ENCODE measurements at regions of chr6 and their contacts with region 1.

Region 1: DNA sequence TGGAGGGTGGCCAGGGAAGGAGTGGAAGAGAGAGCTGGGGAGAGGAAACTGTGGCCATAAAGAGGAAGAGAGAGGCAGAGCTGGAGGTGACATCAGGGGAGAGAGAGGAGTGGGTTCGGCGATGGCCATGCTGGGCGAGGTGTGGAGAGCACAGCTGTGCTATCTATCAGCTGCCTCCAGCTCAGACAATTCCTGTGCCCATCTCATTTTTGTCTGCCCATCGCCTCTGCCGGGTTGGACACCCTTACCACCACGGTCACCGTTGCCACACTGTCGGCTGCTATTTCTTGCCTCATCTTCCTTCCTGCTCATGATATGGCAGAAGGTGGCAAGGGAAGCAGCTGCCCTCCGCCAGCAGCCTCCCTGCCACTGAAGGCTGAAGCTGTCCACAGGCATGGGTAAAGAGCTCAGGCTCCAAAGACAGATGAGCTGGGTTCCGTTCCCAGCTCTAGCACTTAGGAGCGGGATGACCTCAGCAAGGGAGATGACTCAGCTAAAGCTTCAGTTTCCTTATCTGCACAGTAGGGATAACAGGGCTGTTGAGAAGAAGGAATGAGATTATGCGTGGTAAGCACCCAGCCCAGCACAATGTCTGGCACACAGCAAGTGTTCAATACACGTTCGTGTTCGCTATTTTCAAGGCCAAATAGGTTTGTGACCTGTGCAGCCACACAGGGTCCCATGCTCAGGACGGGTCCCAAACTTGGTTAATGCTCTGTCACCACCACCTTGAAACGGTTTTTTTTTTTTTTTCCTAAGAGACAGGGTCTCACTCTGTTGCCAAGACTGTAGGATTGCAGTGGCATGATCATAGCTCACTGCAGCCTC is 21.9 kb upstream of the TAF8 start:
- DNase-seq: no peak
- ATAC-seq: peak; percentile 17
- H3K4me3 Mint-ChIP-seq: peak overlapping the region; percentile 72
- H3K27ac Mint-ChIP-seq: peak overlapping the region; percentile 95
- H3K4me1 Mint-ChIP-seq: peaks cover 71% of the 10 kb centered on the region
- H3K27me3 Mint-ChIP-seq: no peaks in the 10 kb centered on the region

Region 2: DNA sequence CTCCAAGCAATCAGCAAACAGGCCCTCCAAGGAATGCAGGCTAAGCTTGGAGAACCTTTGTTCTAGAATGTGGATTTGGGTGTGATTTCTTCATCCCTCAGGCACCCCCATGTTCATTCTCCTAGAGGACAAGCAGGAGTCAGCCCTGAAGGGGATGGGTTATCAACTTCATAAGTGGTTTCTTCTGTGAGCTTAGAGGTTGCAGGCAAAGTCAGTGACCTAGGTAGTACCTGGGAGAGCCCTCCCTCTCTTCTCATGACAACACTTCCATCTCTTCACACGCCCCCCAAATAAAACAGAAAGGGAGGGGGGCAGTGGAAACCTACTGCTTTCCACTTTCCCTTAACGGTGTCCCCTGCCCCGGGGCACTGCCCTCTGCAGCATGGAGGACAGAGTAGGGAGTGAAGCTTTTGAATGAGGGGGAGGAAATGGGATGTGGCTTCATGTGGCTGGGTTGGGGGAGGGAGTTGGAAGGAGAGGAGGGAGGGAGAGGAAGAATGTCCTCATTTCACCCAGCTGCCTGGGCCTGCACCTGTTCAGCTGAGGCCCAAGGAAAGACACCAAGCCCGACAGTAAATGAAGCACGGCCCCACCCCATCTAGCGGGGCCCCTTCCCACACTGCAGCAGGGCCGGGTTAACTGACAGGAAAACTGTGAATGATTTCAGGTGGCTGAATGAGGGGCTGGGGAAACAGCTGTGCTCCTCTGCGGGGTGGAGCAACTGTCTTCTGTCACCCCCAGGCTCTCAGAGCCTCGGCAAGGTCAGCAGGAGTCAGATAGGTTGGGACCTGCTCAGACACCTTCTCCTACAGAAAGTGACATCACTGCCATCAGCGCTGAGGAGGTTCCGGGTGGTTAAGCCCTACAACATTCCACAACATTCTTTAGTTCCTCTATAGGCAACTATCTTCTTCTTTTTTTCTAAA is 18.2 kb before region 1 on chr6:
- POLR2A ChIA-PET with region 1: interaction called, 10 read pairs
- DNase-seq: peak; percentile 58
- ATAC-seq: peak; percentile 74
- H3K4me3 Mint-ChIP-seq: peak overlapping the region; percentile 85
- H3K27ac Mint-ChIP-seq: peak overlapping the region; percentile 98
- H3K4me1 Mint-ChIP-seq: peaks cover 70% of the 10 kb centered on the region
- H3K27me3 Mint-ChIP-seq: no peaks in the 10 kb centered on the region

Region 3: GRCh38 chr6:42038811-42039408 is 10.5 kb after region 1 on chr6:
- POLR2A ChIA-PET with region 1: interaction called, 26 read pairs
- DNase-seq: no peak
- ATAC-seq: no peak
- H3K4me3 Mint-ChIP-seq: peak overlapping the region; percentile 81
- H3K27ac Mint-ChIP-seq: peak overlapping the region; percentile 94
- H3K4me1 Mint-ChIP-seq: peaks cover 68% of the 10 kb centered on the region
- H3K27me3 Mint-ChIP-seq: no peaks in the 10 kb centered on the region

Region 4: GRCh38 chr6:42043787-42044475 is 15.5 kb after region 1 on chr6:
- POLR2A ChIA-PET with region 1: interaction called, 26 read pairs
- DNase-seq: peak; percentile 95
- ATAC-seq: peak; percentile 38
- H3K4me3 Mint-ChIP-seq: peak overlapping the region; percentile 86
- H3K27ac Mint-ChIP-seq: peak overlapping the region; percentile 94
- H3K4me1 Mint-ChIP-seq: peaks cover 79% of the 10 kb centered on the region
- H3K27me3 Mint-ChIP-seq: no peaks in the 10 kb centered on the region